ENCODE measurements at regions of chr2 and their contacts with region 1.

Region 1: GRCh38 chr2:30208452-30208851 is 22.9 kb upstream of the LBH start:
- DNase-seq: peak; percentile 39
- H3K4me3 ChIP-seq: no peak overlapping the region
- H3K27ac ChIP-seq: no peak overlapping the region
- H3K4me1 ChIP-seq: no peaks in the 10 kb centered on the region
- H3K27me3 ChIP-seq: peaks cover 9% of the 10 kb centered on the region
- CTCF ChIP-seq: peak; percentile 88 to 90

Region 2: GRCh38 chr2:30165050-30165520 is 43.4 kb before region 1 on chr2:
- CTCF ChIA-PET with region 1: interaction called, 5 read pairs
- dilution Hi-C with region 1: no loop called
- in situ Hi-C with region 1: no loop called
- intact Hi-C with region 1: loop called (anchors 1 kb)
- DNase-seq: peak; percentile 80
- H3K4me3 ChIP-seq: no peak overlapping the region
- H3K27ac ChIP-seq: no peak overlapping the region
- H3K4me1 ChIP-seq: peaks cover 5% of the 10 kb centered on the region
- H3K27me3 ChIP-seq: no peaks in the 10 kb centered on the region
- CTCF ChIP-seq: peak; percentile 80 to 91

Region 3: GRCh38 chr2:30336978-30337841 is 128.8 kb after region 1 on chr2:
- CTCF ChIA-PET with region 1: interaction called, 6 read pairs
- dilution Hi-C with region 1: no loop called
- in situ Hi-C with region 1: no loop called
- intact Hi-C with region 1: loop called (anchors 5 kb)
- DNase-seq: no peak
- H3K4me3 ChIP-seq: no peak overlapping the region
- H3K27ac ChIP-seq: no peak overlapping the region
- H3K4me1 ChIP-seq: no peaks in the 10 kb centered on the region
- H3K27me3 ChIP-seq: no peaks in the 10 kb centered on the region
- CTCF ChIP-seq: no peak

Region 4: DNA sequence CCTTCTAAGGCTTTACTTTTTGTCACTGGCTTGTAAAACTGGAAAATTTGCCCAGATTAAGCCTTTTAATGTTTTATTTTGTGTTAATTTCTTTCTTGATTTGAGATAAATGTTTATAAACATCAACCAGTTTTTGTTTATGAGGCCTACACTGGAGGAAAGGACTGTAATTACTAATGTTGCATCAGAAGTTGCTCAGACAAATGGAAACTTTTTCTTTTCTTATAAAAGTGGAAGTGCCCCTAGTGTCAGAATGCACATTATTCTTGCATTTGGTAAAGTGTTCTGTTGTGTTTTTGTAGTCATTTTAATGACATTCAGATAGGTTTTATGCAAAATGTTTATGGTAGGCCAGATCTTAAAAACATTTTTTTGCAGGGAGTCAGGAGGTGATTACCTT is 263.9 kb after region 1 on chr2:
- CTCF ChIA-PET with region 1: interaction called, 11 read pairs
- dilution Hi-C with region 1: no loop called
- in situ Hi-C with region 1: no loop called
- intact Hi-C with region 1: loop called (anchors 1 kb)
- DNase-seq: no peak
- H3K4me3 ChIP-seq: no peak overlapping the region
- H3K27ac ChIP-seq: no peak overlapping the region
- H3K4me1 ChIP-seq: no peaks in the 10 kb centered on the region
- H3K27me3 ChIP-seq: no peaks in the 10 kb centered on the region
- CTCF ChIP-seq: no peak

Region 5: DNA sequence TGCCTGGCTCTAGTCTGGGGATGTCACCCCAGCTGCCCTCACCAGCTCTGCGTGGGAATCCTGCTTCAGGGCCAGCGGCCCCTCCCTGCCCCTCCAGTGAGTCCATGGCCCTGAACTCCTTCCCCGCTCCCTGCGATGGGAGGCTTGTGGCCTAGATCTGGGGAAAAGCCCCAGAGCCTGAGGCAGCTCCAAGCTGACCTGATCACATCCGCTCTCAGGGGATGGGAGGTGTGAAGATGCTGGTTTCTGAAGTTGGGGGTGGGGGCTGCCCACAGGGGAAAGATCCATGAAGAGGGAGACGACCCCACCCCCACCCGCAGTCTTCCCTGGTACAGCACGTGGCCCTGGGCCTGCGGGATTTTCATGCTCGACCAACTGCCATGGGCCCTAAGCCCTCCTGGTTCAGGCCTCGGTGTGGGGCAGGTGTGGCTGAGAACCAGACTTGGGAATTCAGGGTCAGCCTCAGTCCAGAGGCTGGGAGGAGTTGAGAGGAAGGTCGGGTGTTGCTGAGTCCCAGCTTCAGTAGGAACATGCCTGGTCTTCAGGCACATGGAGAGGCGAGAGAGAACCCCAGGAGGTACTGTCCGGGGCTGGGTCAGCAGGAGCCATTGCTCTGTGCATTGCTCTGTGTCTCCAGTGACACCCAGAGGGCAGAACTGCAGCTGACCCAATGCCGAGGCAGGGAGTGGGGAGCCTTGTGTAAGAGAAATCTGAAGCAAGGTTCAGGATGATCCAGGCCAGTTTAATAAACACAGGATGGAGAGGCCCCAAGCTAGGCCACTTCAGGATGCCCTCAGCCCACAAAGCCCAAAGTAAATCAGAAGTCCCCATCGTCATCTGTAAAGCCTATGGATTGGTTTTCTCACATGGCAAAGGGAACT is 483.7 kb after region 1 on chr2:
- CTCF ChIA-PET with region 1: no interaction called
- dilution Hi-C with region 1: no loop called
- in situ Hi-C with region 1: no loop called
- intact Hi-C with region 1: loop called (anchors 1 kb)
- DNase-seq: no peak
- H3K4me3 ChIP-seq: no peak overlapping the region
- H3K27ac ChIP-seq: no peak overlapping the region
- H3K4me1 ChIP-seq: no peaks in the 10 kb centered on the region
- H3K27me3 ChIP-seq: peaks cover 9% of the 10 kb centered on the region
- CTCF ChIP-seq: peak in 1 of 2 donors; percentile 36

Measured in mammary epithelial cell (primary cell).